Activated naive CD4-positive, alpha-beta T cell treated with anti-CD3 and anti-CD28 coated beads for 36 hours (primary cell): ENCODE measurements at regions of chr2 and their contacts with region 1.

Region 1: GRCh38 chr2:105749583-105750400 is 5.1 kb downstream of the NCK2 start:
- DNase-seq: peak; percentile 71
- H3K4me3 Mint-ChIP-seq: peak overlapping the region; percentile 65
- H3K27ac Mint-ChIP-seq: peak overlapping the region; percentile 96
- H3K4me1 Mint-ChIP-seq: peaks cover 77% of the 10 kb centered on the region
- H3K27me3 Mint-ChIP-seq: no peaks in the 10 kb centered on the region

Region 2: DNA sequence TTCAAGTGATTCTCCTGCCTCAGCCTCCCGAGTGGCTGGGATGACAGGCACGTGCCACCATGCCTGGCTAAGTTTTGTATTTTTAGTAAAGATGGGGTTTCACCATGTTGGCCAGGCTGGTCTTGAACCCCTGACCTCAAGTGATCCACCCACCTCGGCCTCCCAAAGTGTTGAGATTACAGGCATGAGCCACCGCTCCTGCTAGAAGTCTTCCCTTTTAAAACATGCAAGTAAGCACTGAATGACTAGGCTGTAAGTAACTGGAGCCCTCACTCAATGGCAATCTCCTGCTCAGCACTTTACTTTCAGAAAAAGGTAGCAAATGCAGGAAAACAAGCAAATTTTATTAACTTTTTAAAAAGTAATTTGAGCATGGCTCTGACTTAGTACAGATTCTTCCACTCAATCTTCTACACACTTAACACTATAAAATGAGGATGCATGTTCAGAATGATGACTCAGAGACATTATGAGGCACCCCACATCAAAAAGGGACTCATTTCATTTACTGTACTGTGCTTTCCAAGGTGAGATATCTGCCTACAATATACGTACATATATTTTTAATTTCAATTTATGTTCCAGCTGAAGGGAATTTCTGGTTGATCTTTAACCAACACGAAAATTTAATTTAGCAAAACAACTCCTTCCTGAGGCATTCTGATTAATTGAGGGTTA is 11.7 kb before region 1 on chr2:
- CTCF ChIA-PET with region 1: interaction called, 6 read pairs
- intact Hi-C with region 1: loop called (anchors 1 kb)
- DNase-seq: peak; percentile 45
- H3K4me3 Mint-ChIP-seq: peak overlapping the region; percentile 69
- H3K27ac Mint-ChIP-seq: peak overlapping the region; percentile 97
- H3K4me1 Mint-ChIP-seq: peaks cover 71% of the 10 kb centered on the region
- H3K27me3 Mint-ChIP-seq: no peaks in the 10 kb centered on the region

Region 3: DNA sequence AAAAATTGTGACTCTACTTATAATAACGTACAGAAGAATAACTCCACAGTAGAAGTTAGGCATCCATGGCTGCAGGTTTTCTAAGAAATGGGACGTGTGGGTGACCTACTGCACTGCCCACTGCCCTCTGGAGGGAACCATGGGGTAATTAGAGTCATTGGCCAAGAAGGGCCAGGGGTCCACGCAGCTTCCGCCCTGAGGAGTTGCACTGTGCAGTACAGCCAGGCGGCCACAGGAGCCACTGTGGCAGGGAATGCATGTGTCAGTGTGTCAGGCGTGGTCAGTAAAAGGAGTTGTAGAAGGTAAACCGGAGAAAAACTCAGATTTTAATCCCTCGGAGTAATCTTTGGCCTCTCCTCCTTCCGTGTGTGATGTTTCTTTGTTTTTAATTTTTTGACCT is 19.7 kb after region 1 on chr2:
- CTCF ChIA-PET with region 1: interaction called, 3 read pairs
- intact Hi-C with region 1: loop called (anchors 2 kb)
- DNase-seq: no peak
- H3K4me3 Mint-ChIP-seq: no peak overlapping the region
- H3K27ac Mint-ChIP-seq: peak overlapping the region; percentile 32
- H3K4me1 Mint-ChIP-seq: peaks cover 94% of the 10 kb centered on the region
- H3K27me3 Mint-ChIP-seq: no peaks in the 10 kb centered on the region

Region 4: DNA sequence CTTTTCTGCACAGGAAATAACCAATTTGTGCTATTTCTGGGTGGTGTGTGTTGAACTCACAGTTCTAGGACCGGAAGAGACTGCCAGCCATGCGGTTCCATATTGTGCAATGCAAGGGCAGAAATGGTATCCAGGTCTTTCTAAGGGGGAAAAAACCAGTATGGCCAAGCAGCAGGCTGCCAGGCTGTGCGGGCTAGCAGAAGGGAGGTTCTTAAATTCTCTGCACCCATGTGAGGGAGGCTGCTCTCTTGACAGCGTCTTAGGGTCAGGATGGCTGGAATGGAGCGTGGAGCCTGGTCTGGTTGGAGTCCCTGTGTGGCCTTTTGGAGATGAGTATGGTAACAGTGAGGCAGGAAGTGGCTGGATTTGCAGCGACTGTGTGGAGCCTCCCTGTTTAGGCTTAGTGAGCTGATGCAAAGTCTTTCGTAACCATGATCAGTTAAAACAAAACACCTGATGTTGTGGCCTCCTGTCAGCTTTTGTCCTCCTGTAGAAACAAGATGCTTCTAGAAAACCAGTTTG is 47.6 kb after region 1 on chr2:
- CTCF ChIA-PET with region 1: interaction called, 17 read pairs
- intact Hi-C with region 1: loop called (anchors 1 kb)
- DNase-seq: peak; percentile 66
- H3K4me3 Mint-ChIP-seq: peak overlapping the region; percentile 32
- H3K27ac Mint-ChIP-seq: peak overlapping the region; percentile 92
- H3K4me1 Mint-ChIP-seq: peaks cover 93% of the 10 kb centered on the region
- H3K27me3 Mint-ChIP-seq: no peaks in the 10 kb centered on the region

Region 5: DNA sequence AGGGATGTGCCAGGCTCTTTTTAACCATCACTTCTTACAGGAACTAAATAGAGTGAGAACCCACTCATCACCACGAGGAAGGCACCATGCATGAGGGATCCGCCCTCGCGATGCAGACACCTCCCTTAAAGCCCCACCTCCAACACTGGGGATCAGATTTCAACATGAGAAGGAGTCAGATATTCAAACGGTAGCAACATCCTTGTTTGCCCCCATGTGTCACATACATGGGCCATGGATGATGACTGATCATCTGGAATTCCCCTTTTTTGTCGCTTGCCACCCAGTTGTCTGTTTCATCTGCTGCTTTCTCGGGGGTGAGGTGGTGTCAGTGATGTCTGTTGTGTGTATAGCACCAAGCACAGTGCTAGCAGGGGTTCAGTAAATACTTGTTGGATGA is 52.8 kb after region 1 on chr2:
- CTCF ChIA-PET with region 1: interaction called, 17 read pairs
- intact Hi-C with region 1: loop called (anchors 1 kb)
- DNase-seq: peak; percentile 82
- H3K4me3 Mint-ChIP-seq: peak overlapping the region; percentile 8
- H3K27ac Mint-ChIP-seq: peak overlapping the region; percentile 86
- H3K4me1 Mint-ChIP-seq: peaks cover 94% of the 10 kb centered on the region
- H3K27me3 Mint-ChIP-seq: no peaks in the 10 kb centered on the region

Region 6: DNA sequence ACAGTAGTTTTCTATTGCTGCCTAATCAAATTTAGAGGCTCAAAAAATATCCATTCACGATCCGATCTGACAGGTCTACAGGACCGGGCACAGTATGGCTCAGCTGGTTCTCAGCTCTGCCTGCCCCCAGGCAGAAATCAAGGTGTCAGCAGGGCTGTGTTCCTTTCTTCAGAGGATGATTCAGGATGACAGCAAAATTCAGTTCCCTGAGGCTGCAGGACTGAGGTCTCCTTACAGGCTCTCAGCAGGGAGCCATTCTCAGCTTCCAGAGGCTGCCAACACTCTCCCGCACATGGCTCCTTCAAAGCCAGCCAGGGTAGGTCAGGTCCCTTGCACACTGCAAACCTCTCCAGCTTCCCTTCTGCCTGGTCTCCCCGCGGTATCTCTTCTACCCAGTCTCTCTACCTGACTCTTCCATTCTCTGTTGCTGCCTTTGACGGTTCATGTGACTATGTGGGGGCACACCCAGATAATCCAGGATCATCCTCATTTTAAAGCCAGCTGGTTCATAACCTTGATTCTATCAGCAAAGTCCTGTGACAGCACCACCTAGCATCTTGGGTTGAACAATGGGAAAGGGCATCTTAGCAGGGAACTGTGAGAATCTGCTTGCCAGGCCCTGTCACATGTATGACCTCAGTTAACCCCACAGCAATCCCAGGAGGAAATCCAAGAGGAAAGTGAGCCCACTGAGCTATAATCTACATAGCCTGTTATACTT is 393.9 kb after region 1 on chr2:
- CTCF ChIA-PET with region 1: interaction called, 3 read pairs
- intact Hi-C with region 1: loop called (anchors 5 kb)
- DNase-seq: no peak
- H3K4me3 Mint-ChIP-seq: no peak overlapping the region
- H3K27ac Mint-ChIP-seq: peak overlapping the region; percentile 66
- H3K4me1 Mint-ChIP-seq: peaks cover 77% of the 10 kb centered on the region
- H3K27me3 Mint-ChIP-seq: no peaks in the 10 kb centered on the region